Posterior vena cava (tissue), 2 donors: ENCODE measurements at regions of chr10 and their contacts with region 1.

Region 1: DNA sequence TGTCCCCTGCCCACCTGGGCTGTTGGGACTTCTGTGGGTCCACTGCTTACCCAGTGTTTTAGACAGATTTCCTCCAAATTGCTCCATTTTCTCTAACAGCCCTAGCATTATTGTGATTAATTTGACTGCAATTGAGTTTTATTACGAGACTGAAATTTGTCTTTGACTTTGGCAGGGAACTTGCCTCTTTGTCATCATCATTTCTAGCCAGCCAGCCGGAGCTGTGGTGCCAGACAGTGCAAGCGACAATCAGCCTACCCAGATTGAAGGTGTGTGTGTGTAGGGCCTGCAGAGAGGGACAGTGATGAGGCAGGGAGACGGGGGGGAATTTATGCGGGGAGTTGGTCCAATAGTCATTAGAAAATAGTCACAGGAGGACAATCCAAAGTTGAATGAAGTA is 743.0 kb downstream of the NRG3 start:
- DNase-seq: no peak

Region 2: GRCh38 chr10:83166372-83166771 is 548.4 kb after region 1 on chr10:
- intact Hi-C with region 1: loop called in 1 of 2 experiments (anchors 5 kb)
- DNase-seq: no peak